ENCODE measurements at regions of chr1 and their contacts with region 1.

Region 1: GRCh38 chr1:44786138-44786840 is 1.7 kb downstream of the BEST4 start:
- DNase-seq: peak; percentile 80
- CTCF ChIP-seq: peak; percentile 91

Region 2: GRCh38 chr1:44799770-44800584 is 13.7 kb after region 1 on chr1 and contains the start of gene PLK3:
- CTCF ChIA-PET with region 1: interaction called, 98 read pairs
- POLR2A ChIA-PET with region 1: interaction called, 13 read pairs
- DNase-seq: peak; percentile 99
- CTCF ChIP-seq: peak; percentile 94